GM12878 (cell line): ENCODE measurements at regions of chr2 and their contacts with region 1.

Region 1: DNA sequence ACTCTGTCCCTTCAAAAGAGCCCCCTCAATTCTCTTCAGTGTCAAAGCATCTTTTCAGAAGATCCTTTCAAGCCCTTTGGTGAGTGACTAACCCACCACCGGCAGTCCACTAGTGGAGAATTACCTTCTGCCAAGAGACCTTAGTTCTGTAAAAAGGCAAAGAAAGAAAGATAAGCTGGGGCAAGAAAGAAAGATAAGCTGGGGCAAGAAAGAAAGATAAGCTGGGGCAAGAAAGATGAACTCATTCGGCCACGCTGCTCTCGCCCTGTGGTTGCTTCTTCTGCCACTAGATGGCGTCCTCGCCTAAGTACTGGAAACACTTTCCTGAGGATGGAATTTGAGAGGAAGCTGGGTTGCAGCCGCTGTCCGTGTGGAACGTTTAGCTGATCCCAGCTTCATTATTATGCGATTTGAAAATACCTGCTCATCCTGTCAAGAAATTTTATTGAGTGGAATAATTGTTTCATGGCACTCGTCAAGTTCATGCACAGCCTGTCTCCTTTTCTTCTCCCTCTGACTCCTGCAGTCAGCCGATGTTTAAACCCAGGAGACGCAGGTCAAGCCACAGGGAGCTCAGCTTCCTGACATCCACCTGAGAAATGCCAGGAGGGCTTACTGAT is 17.3 kb upstream of the ANXA4 start:
- DNase-seq: no peak
- ATAC-seq: peak; percentile 98
- H3K4me3 ChIP-seq: peak overlapping the region; percentile 69; the same call in 1 of the 2 replicates
- H3K27ac ChIP-seq: no peak overlapping the region
- H3K4me1 ChIP-seq: no peaks in the 10 kb centered on the region; the same call in 1 of the 2 replicates
- H3K27me3 ChIP-seq: no peaks in the 10 kb centered on the region
- CTCF ChIP-seq: peak; percentile 81 to 85 (median 82)
- EP300 ChIP-seq: no peak
- POLR2A ChIP-seq: no peak
- RAD21 ChIP-seq: peak; percentile 94

Region 2: GRCh38 chr2:69535817-69536241 is 188.8 kb before region 1 on chr2:
- CTCF ChIA-PET with region 1: no interaction called
- POLR2A ChIA-PET with region 1: no interaction called
- RAD21 ChIA-PET with region 1: no interaction called
- SMC1A ChIA-PET with region 1: no interaction called
- in situ Hi-C with region 1: no loop called
- intact Hi-C with region 1: no loop called
- DNase-seq: no peak
- ATAC-seq: peak; percentile 90
- H3K4me3 ChIP-seq: no peak overlapping the region
- H3K27ac ChIP-seq: peak overlapping the region; percentile 45
- H3K4me1 ChIP-seq: peaks cover 12% of the 10 kb centered on the region
- H3K27me3 ChIP-seq: no peaks in the 10 kb centered on the region
- CTCF ChIP-seq: no peak
- EP300 ChIP-seq: 0 out of 4 replicates have a peak, but pooled peaks of 1 of the 2 experiments have one; percentile 26
- POLR2A ChIP-seq: no peak
- RAD21 ChIP-seq: no peak

Region 3: DNA sequence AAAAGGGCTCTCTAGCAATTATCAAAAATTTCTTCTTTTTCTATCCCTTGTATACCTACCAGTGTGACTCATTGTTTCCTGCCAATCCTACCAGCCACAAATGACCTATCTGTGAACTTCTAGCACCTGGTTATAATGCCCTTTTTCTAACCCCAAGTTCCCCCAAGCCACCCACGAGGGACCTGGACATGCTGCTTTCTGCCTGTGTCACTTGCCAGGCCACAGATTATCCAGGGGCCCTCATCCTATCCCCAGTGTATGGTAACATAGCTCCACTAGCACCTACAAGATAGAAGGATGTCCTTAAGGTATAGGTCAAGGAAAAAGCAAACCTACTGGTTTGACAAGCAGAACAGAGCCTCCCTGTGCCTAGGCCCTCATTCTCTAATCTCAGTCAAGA is 107.9 kb before region 1 on chr2:
- CTCF ChIA-PET with region 1: interaction called, 10 read pairs
- POLR2A ChIA-PET with region 1: interaction called, 3 read pairs
- RAD21 ChIA-PET with region 1: interaction called, 3 read pairs
- SMC1A ChIA-PET with region 1: no interaction called
- in situ Hi-C with region 1: no loop called
- intact Hi-C with region 1: no loop called
- DNase-seq: no peak
- ATAC-seq: peak; percentile 76
- H3K4me3 ChIP-seq: no peak overlapping the region; the same call in 1 of the 2 replicates
- H3K27ac ChIP-seq: peak overlapping the region; percentile 1; the same call in 1 of the 2 replicates
- H3K4me1 ChIP-seq: peaks cover 34% of the 10 kb centered on the region
- H3K27me3 ChIP-seq: no peaks in the 10 kb centered on the region
- CTCF ChIP-seq: no peak
- EP300 ChIP-seq: no peak
- POLR2A ChIP-seq: no peak
- RAD21 ChIP-seq: no peak

Region 4: DNA sequence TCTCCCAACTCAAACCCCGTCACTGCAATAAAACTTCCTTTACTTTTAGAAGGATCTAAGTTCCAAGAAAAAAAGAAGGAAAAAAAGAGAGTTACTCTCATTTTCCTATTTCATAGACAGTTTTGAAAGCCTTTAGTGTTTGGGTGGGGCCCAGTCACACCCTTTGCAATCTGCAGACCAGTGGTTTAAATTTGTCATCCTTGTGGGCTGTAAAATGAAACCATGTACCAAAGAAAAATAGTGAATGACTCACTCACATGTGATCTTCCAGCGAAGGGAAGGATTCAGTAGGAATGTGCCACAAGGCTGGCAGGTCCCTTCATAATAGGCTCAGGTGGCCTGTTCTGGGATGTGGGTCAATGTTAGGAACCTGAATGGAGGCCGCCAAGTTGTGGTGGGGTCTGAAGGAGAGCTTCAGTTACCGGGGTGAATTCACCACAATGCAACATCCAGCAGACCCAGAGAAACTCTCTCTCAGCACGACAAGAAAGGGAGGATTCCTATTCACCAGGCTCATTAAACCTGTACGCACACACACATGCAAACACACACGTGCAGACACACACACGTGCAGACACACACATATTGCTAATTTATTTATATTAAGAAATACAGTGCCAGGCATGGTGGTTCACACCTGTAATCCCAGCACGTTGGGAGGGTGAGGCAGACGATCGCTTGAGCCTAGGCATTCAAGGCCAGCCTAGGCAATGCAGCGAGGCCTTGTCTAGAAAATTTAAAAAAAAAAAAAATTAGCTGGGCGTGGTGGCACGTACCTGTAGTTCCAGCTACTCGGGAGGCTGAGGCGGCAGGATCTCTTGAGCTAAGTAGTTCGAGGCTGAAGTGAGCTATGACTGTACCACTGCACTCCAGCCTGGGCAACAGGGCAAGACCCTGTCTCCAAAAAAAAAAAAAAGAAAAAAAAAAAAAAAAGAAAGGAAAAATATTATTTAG is 45.8 kb after region 1 on chr2:
- CTCF ChIA-PET with region 1: interaction called, 28 read pairs
- POLR2A ChIA-PET with region 1: no interaction called
- RAD21 ChIA-PET with region 1: interaction called, 11 read pairs
- SMC1A ChIA-PET with region 1: interaction called, 28 read pairs
- in situ Hi-C with region 1: no loop called
- intact Hi-C with region 1: no loop called
- DNase-seq: no peak
- ATAC-seq: peak; percentile 62
- H3K4me3 ChIP-seq: no peak overlapping the region
- H3K27ac ChIP-seq: no peak overlapping the region
- H3K4me1 ChIP-seq: peaks cover 60% of the 10 kb centered on the region
- H3K27me3 ChIP-seq: no peaks in the 10 kb centered on the region
- CTCF ChIP-seq: no peak
- EP300 ChIP-seq: no peak
- POLR2A ChIP-seq: no peak
- RAD21 ChIP-seq: no peak

Region 5: GRCh38 chr2:69816923-69817542 is 92.4 kb after region 1 on chr2:
- CTCF ChIA-PET with region 1: interaction called, 408 read pairs
- POLR2A ChIA-PET with region 1: interaction called, 22 read pairs
- RAD21 ChIA-PET with region 1: interaction called, 245 read pairs
- SMC1A ChIA-PET with region 1: interaction called, 290 read pairs
- in situ Hi-C with region 1: loop called (anchors 5 kb)
- intact Hi-C with region 1: loop called (anchors 1 kb)
- DNase-seq: peak; percentile 66
- ATAC-seq: peak; percentile 89
- H3K4me3 ChIP-seq: no peak overlapping the region
- H3K27ac ChIP-seq: no peak overlapping the region; the same call in 1 of the 2 replicates
- H3K4me1 ChIP-seq: no peaks in the 10 kb centered on the region
- H3K27me3 ChIP-seq: no peaks in the 10 kb centered on the region
- CTCF ChIP-seq: peak; percentile 71 to 82 (median 80)
- EP300 ChIP-seq: no peak
- POLR2A ChIP-seq: no peak
- RAD21 ChIP-seq: peak; percentile 92

Region 6: GRCh38 chr2:69863298-69863697 is 138.6 kb after region 1 on chr2:
- CTCF ChIA-PET with region 1: interaction called, 17 read pairs
- POLR2A ChIA-PET with region 1: interaction called, 3 read pairs
- RAD21 ChIA-PET with region 1: interaction called, 5 read pairs
- SMC1A ChIA-PET with region 1: interaction called, 6 read pairs
- in situ Hi-C with region 1: no loop called
- intact Hi-C with region 1: no loop called
- DNase-seq: no peak
- ATAC-seq: no peak
- H3K4me3 ChIP-seq: no peak overlapping the region
- H3K27ac ChIP-seq: no peak overlapping the region
- H3K4me1 ChIP-seq: no peaks in the 10 kb centered on the region
- H3K27me3 ChIP-seq: no peaks in the 10 kb centered on the region
- CTCF ChIP-seq: no peak
- EP300 ChIP-seq: no peak
- POLR2A ChIP-seq: no peak
- RAD21 ChIP-seq: no peak

Region 7: GRCh38 chr2:70019096-70019495 is 294.4 kb after region 1 on chr2:
- CTCF ChIA-PET with region 1: no interaction called
- POLR2A ChIA-PET with region 1: no interaction called
- RAD21 ChIA-PET with region 1: no interaction called
- SMC1A ChIA-PET with region 1: no interaction called
- in situ Hi-C with region 1: no loop called
- intact Hi-C with region 1: no loop called
- DNase-seq: no peak
- ATAC-seq: no peak
- H3K4me3 ChIP-seq: no peak overlapping the region
- H3K27ac ChIP-seq: no peak overlapping the region
- H3K4me1 ChIP-seq: peaks cover 5% of the 10 kb centered on the region
- H3K27me3 ChIP-seq: no peaks in the 10 kb centered on the region
- CTCF ChIP-seq: no peak
- EP300 ChIP-seq: no peak
- POLR2A ChIP-seq: no peak
- RAD21 ChIP-seq: no peak

Region 8: GRCh38 chr2:70301344-70302194 is 576.9 kb after region 1 on chr2 and contains the start of gene FAM136A:
- CTCF ChIA-PET with region 1: interaction called, 10 read pairs
- POLR2A ChIA-PET with region 1: no interaction called
- RAD21 ChIA-PET with region 1: no interaction called
- SMC1A ChIA-PET with region 1: interaction called, 4 read pairs
- in situ Hi-C with region 1: no loop called
- intact Hi-C with region 1: no loop called
- DNase-seq: peak; percentile 40
- ATAC-seq: peak; percentile 93
- H3K4me3 ChIP-seq: peak within 1 kb of the TSS; percentile 84
- H3K27ac ChIP-seq: peak within 1 kb of the TSS; percentile 85
- H3K4me1 ChIP-seq: peaks cover 3% of the 10 kb centered on the region; the same call in 1 of the 2 replicates
- H3K27me3 ChIP-seq: no peaks in the 10 kb centered on the region
- CTCF ChIP-seq: peak; percentile 88 to 97 (median 95)
- EP300 ChIP-seq: no peak
- POLR2A ChIP-seq: peak; percentile 82
- RAD21 ChIP-seq: peak; percentile 70
- polyA plus RNA-seq, gene FAM136A: 128 to 134 TPM